ENCODE measurements at regions of chr13 and their contacts with region 1.

Region 1: DNA sequence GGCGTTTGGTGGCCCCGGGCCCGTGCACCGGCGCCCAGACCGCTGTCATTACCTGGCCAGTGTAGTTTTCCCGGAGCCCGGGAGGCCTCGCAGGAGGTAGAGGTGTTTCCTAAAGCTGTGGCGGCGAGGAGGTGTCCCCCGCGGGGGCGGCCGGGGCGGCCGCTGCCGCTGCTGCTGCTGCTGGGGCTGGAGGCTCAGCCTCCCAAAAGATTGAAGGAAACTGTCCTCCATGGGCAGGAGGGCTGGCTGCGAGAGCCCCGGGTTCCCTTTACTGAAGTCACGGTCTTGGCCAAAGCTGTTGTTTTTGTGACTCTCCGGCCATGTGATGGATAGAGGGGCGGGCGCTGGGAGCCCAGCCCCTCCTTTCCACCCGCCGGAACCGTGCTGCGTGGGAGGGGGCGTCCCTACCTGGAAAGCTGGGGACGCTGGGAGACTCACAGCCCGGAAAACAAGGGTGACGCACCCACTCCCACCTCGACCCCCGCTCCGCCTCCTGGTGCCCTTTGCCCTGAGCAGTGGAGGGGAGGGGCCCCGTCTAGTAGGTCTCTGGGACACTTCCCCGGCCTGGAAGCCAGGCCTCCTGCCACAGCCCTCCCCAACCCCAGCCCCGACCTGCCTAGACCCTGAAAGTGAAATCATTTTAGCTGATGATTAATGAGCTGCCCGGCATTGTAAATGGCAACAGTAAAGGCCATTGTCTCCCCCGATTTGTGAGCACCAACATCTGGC is at the start of gene N4BP2L1:
- DNase-seq: peak; percentile 94
- ATAC-seq: peak; percentile 77
- H3K4me3 Mint-ChIP-seq: peak within 1 kb of the TSS; percentile 86
- H3K27ac Mint-ChIP-seq: peak within 1 kb of the TSS; percentile 94
- H3K4me1 Mint-ChIP-seq: peaks cover 31% of the 10 kb centered on the region
- H3K27me3 Mint-ChIP-seq: no peaks in the 10 kb centered on the region
- total RNA-seq, gene N4BP2L1: 16.1 to 16.5 TPM

Region 2: DNA sequence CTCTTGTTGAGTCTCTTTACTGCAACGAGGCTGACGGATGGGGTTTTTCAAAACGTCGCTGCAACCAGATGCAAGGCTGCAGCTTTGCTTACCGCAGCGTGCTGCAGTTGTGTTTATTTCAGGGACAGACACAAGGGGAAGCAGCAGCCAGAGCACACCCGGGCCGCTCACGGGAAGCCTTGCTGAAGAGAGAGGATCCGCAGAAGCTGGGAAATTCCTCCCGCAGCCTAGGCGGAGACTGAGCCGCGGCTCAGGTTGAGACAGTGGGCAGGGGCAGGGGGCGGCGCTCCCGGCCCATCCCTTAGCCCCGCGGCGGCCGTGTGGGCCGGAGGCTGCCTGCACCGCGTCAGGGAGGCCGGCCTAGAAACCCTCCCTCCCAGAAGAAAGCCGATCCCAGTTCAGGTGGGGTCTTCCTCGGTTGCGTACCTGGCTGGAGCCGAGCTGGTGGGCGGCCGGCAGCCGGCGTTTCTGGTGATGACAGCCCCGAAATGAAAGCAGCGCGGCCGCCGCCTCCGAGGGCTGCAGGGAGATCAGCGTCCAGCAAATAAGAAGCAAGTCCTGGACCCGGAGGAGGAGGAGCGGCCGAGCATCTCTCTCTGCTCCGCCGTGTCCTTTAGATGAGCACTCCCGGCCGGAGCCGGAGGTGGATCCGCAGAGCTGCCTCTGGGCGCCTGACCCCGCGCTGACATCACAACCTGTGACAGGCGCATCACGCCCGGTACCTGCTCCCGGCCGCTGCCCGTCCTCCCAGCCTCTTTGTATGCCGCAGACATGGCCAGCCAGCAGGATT is 396.8 kb before region 1 on chr13 and contains the start of gene FRY:
- CTCF ChIA-PET with region 1: no interaction called
- POLR2A ChIA-PET with region 1: no interaction called
- intact Hi-C with region 1: loop called in 1 of 2 experiments (anchors 5 kb)
- DNase-seq: peak; percentile 74
- ATAC-seq: peak; percentile 83
- H3K4me3 Mint-ChIP-seq: peak within 1 kb of the TSS; percentile 84
- H3K27ac Mint-ChIP-seq: peak within 1 kb of the TSS; percentile 62
- H3K4me1 Mint-ChIP-seq: peaks cover 29% of the 10 kb centered on the region
- H3K27me3 Mint-ChIP-seq: no peaks in the 10 kb centered on the region
- total RNA-seq, gene FRY: 1.9 to 3.5 TPM

Region 3: GRCh38 chr13:32315238-32316027 is 112.6 kb before region 1 on chr13 and contains the starts of genes BRCA2 and ZAR1L:
- CTCF ChIA-PET with region 1: interaction called, 3 read pairs
- POLR2A ChIA-PET with region 1: interaction called, 11 read pairs
- intact Hi-C with region 1: loop called (anchors 1 kb)
- DNase-seq: peak; percentile 94
- ATAC-seq: peak; percentile 95
- H3K4me3 Mint-ChIP-seq: peak within 1 kb of the TSS; percentile 92
- H3K27ac Mint-ChIP-seq: peak within 1 kb of the TSS; percentile 100
- H3K4me1 Mint-ChIP-seq: peaks cover 9% of the 10 kb centered on the region
- H3K27me3 Mint-ChIP-seq: no peaks in the 10 kb centered on the region
- total RNA-seq, gene BRCA2: 34.1 to 49.0 TPM
- total RNA-seq, gene ZAR1L: not detected

Region 4: DNA sequence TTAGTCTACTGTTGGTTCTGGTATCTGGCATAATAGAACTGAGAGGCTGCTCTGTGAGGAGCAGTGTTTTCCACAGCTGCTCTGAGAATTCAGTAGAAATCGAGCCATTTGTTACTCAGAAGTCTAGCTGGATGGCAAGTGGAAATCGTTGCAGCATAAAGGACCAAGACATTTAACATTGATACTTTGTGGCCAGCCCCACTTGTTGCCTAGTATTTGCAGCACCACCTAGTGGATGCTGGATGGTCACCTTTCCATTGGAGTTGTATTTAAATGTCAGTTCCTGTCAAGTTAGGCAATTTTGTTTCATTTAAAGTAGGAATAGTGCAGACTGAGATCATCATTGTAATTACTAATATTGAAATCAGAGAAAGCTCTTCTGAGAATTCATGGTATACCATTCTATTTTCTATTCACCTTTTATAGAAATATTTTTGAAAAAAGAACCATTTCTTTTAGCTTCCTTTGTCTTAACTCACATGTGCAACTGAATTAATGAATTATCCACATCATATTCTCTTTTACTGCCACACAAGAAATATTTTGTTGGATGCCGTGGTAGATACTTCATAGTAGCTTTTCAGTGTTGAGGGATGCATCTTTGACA is 222.8 kb after region 1 on chr13:
- CTCF ChIA-PET with region 1: interaction called, 4 read pairs
- POLR2A ChIA-PET with region 1: no interaction called
- intact Hi-C with region 1: loop called in 1 of 2 experiments (anchors 2 kb)
- DNase-seq: peak; percentile 80
- ATAC-seq: peak; percentile 90
- H3K4me3 Mint-ChIP-seq: no peak overlapping the region
- H3K27ac Mint-ChIP-seq: peak overlapping the region; percentile 72
- H3K4me1 Mint-ChIP-seq: peaks cover 47% of the 10 kb centered on the region
- H3K27me3 Mint-ChIP-seq: no peaks in the 10 kb centered on the region

Region 5: DNA sequence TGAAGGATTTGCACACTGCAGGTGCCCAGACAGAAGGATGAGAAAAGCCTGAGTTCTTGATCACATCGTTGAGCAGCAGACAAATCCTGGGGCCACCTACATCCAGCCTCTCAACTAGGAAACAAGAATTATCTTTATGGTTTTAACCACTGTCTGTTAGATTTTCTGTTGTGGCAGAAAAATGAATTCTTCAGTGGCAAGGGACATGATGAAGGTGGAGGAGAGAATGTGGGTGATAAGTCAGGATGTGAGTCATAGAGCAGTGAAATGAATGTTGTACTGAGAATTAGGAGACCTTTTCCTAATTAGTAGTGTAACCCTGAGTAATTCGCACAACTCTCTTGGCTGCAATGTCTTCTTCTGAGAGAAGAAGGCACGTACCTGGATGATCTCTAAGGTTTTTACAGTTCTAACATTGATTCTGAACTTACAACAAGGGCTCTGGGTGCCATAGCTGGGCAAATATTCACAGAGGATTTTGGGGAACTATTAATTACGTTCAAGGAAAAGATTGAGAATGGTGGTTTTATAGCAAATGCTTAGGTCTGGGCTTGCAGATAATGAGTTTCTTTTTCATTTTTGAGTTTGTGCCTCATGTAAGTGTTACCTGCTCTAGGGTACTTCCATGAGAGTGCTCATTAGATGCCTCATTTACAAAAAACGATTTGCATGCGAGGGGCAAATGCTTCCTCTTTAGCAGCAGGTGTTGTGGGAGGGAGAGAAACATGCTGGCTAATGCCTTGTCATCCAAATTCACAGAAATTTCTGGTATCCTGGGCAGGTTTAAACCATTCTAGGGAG is 477.2 kb after region 1 on chr13:
- CTCF ChIA-PET with region 1: no interaction called
- POLR2A ChIA-PET with region 1: no interaction called
- intact Hi-C with region 1: loop called in 1 of 2 experiments (anchors 1 kb)
- DNase-seq: peak; percentile 39
- ATAC-seq: peak; percentile 95
- H3K4me3 Mint-ChIP-seq: peak overlapping the region; percentile 15
- H3K27ac Mint-ChIP-seq: peak overlapping the region; percentile 90
- H3K4me1 Mint-ChIP-seq: peaks cover 17% of the 10 kb centered on the region
- H3K27me3 Mint-ChIP-seq: peaks cover 4% of the 10 kb centered on the region